Calu3 (cell line): ENCODE measurements at regions of chr10 and their contacts with region 1.

Region 1: GRCh38 chr10:34637418-34637911 is 177.6 kb downstream of the PARD3 start:
- DNase-seq: peak; percentile 83
- H3K4me3 Mint-ChIP-seq: no peak overlapping the region
- H3K27ac Mint-ChIP-seq: peak overlapping the region; percentile 8
- H3K4me1 Mint-ChIP-seq: peaks cover 40% of the 10 kb centered on the region
- H3K27me3 Mint-ChIP-seq: no peaks in the 10 kb centered on the region
- CTCF ChIP-seq: peak; percentile 96

Region 2: GRCh38 chr10:33193701-33194521 is 1443.6 kb before region 1 on chr10:
- CTCF ChIA-PET with region 1: interaction called, 4 read pairs
- intact Hi-C with region 1: loop called (anchors 5 kb)
- DNase-seq: peak; percentile 32
- H3K4me3 Mint-ChIP-seq: no peak overlapping the region
- H3K27ac Mint-ChIP-seq: peak overlapping the region; percentile 5
- H3K4me1 Mint-ChIP-seq: peaks cover 54% of the 10 kb centered on the region
- H3K27me3 Mint-ChIP-seq: no peaks in the 10 kb centered on the region
- CTCF ChIP-seq: peak; percentile 5

Region 3: DNA sequence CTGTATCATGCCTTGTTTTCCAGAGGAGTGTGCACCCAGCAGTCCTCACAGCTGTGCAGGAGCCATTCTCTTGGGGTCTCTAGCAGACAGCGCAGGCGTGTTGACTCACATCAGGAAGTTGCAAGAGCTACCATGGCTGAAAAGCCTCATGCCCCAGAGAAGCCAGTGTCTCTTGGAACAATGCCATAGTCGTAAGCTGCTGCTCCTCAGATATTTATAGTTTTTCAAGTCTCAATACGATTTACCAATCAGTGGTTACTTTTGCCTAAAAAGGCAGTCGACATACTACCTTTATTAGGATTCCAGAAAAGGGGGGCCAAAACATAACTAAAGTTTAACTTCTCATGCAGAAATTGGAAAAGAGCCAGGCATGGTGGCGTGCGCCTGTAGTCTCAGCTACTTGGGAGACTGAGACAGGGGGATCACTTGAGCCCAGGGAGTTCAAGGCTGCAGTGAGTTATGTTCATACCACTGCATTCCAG is 230.1 kb before region 1 on chr10:
- CTCF ChIA-PET with region 1: no interaction called
- intact Hi-C with region 1: loop called (anchors 5 kb)
- DNase-seq: peak; percentile 47
- H3K4me3 Mint-ChIP-seq: no peak overlapping the region
- H3K27ac Mint-ChIP-seq: peak overlapping the region; percentile 5
- H3K4me1 Mint-ChIP-seq: peaks cover 62% of the 10 kb centered on the region
- H3K27me3 Mint-ChIP-seq: no peaks in the 10 kb centered on the region
- CTCF ChIP-seq: no peak

Region 4: DNA sequence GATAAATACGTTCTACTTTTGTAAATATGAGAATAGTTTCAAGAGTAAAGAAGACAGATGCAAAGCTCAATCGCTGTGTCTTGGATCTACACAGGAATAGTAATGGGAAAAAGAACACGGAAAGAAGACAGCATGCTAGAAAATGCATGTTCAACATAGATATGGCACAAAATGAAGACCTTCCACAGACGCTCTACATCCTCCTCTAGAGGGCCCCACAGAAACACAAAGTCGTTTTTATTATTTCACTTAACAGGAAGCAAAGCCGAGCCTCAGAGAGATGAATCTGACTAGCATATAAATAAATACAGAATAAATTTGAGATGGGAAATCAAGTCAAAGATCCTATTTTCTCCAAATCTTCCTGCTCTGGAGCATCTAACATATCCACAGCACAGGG is 114.9 kb before region 1 on chr10:
- CTCF ChIA-PET with region 1: no interaction called
- intact Hi-C with region 1: loop called (anchors 5 kb)
- DNase-seq: no peak
- H3K4me3 Mint-ChIP-seq: no peak overlapping the region
- H3K27ac Mint-ChIP-seq: no peak overlapping the region
- H3K4me1 Mint-ChIP-seq: peaks cover 80% of the 10 kb centered on the region
- H3K27me3 Mint-ChIP-seq: no peaks in the 10 kb centered on the region
- CTCF ChIP-seq: no peak